ENCODE measurements at regions of chr20 and their contacts with region 1.

Region 1: DNA sequence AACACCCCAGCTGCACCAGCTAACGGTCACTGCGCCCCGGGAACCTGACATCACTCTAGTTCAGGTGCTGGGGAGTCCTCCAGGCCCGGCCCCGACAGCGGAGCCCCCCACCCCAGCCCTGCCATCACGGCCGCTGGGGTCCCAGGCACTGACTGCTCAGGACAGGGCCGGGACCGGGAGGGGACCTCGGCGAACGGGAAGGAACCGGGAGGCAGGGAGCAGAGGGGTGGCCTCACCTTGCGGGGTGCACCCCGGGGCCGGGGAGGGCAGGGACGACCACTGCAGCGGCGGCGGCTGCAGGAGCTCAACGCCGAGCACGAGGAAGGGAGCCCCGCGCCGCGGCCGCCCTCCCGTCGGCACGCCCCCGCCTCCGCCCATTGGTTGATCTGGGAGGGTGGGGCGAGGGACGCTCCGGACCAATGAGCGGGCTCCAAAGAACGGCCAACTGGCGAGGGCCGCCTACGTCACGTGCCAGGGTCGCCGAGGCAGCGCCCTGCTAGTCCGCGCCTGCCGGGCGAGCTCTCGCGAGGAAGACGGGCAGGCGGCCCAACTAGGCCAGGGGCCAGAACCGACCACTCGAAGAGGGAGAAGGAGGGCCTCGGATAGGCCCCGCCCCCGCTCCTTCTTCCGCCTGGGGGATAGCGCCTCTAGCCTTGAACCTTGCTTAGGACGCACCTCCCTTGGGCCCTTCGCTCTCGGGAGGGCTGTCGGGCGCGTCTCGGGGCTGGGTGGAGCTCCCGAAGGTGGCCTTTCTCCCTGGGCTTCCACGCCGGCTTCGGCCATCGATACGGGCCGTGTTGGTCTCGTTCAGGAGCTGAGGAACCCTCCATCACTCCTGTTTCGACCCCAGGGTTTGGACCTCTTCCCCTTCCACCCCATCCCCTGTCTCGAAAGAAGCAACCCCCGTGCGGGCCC is at the start of gene ADISSP:
- DNase-seq: peak; percentile 99
- H3K4me3 ChIP-seq: peak within 1 kb of the TSS; percentile 84
- H3K27ac ChIP-seq: peak within 1 kb of the TSS; percentile 66
- H3K4me1 ChIP-seq: peaks cover 25% of the 10 kb centered on the region
- CTCF ChIP-seq: no peak
- total RNA-seq, gene ADISSP: 62.1 and 66.7 TPM in 2 replicates

Region 2: GRCh38 chr20:3563548-3564177 is 204.0 kb before region 1 on chr20:
- CTCF ChIA-PET with region 1: no interaction called
- POLR2A ChIA-PET with region 1: no interaction called
- intact Hi-C with region 1: loop called (anchors 5 kb)
- DNase-seq: peak; percentile 65
- H3K4me3 ChIP-seq: no peak overlapping the region
- H3K27ac ChIP-seq: no peak overlapping the region
- H3K4me1 ChIP-seq: peaks cover 11% of the 10 kb centered on the region
- CTCF ChIP-seq: peak; percentile 95

Region 3: DNA sequence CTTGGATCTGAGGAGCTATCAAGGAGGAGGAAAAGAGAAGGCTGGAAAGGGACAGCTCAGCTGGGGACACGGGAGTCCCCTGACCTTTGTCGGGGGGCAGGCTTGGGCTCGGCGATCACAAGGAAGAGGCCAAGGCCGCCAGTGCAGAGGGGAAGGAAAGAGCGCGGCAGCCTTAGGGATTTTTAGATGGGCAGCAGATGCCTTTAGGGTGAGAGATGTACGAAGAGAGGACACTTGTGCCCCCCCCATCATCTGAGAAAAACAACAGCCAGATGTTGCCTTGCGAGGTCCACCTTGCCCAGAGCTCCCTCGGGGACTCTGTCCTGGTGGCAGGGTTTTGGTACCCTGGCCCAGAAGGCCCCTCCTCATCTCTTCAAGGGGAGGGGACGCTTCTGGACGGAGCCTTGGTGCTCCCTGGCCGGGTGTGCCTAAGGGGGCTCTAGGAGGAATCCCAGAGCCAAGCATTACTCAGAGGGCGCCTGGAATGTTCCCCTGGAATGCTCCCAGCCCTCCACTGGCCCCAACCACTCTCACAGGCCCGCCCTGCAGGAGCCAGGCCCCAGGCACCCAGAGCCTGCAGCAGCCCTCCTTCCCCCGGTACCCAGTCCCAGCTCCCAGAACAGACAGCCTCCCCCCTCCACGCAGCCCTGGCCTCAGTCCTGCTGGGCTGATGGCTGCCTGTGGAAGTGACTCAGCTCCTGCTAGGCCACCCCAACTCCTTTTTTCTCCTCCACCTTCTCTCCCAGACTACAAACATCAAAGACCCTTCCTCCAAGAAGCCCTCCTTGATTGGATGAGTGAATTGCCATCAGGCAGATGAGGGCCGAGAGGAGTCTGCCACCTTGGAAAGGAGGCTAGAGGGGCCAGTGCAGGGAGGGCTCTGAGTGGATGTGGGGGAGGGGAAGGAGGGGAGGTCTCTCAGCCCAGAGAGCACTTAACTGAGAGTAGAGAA is 87.7 kb before region 1 on chr20:
- CTCF ChIA-PET with region 1: interaction called, 4 read pairs
- POLR2A ChIA-PET with region 1: interaction called, 7 read pairs
- intact Hi-C with region 1: loop called (anchors 1 kb)
- DNase-seq: no peak
- H3K4me3 ChIP-seq: no peak overlapping the region
- H3K27ac ChIP-seq: no peak overlapping the region
- H3K4me1 ChIP-seq: no peaks in the 10 kb centered on the region
- CTCF ChIP-seq: no peak

Region 4: DNA sequence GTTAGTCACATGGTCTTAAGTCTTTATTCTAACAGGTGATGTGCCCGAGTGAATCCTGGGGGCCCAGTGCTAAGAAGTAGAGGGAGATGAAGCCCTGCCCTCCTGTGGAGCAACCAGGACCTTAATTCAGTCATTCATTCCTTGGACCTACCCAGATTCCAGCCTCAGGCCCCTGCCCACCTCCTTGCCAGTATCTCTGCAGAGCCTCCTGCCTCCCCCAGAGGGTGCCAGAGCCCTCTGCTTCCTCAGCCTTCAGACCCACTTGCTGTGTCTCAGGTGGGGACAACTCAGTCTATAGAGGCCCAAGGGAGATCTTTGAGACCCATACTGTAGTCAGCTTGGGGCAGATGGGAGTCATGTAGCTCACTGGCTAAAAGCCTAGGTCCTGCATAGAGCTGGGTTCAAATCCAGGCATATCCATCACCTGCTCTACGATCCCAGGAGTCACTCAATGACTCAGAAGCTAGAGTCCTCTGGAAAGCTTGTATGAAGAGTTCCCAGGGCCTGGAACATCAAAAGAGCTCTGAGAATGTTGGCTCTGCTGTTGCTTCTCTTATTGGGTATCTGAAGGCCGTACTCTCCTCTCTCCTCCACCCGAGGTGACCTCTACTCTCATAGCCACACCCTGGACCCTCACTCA is 51.4 kb before region 1 on chr20:
- CTCF ChIA-PET with region 1: interaction called, 16 read pairs
- POLR2A ChIA-PET with region 1: interaction called, 5 read pairs
- intact Hi-C with region 1: loop called (anchors 1 kb)
- DNase-seq: peak; percentile 74
- H3K4me3 ChIP-seq: no peak overlapping the region
- H3K27ac ChIP-seq: no peak overlapping the region
- H3K4me1 ChIP-seq: peaks cover 13% of the 10 kb centered on the region
- CTCF ChIP-seq: peak; percentile 87

Region 5: GRCh38 chr20:3753098-3753980 is 14.3 kb before region 1 on chr20:
- CTCF ChIA-PET with region 1: interaction called, 6 read pairs
- POLR2A ChIA-PET with region 1: interaction called, 11 read pairs
- intact Hi-C with region 1: loop called (anchors 1 kb)
- DNase-seq: peak; percentile 71
- H3K4me3 ChIP-seq: no peak overlapping the region
- H3K27ac ChIP-seq: no peak overlapping the region
- H3K4me1 ChIP-seq: no peaks in the 10 kb centered on the region
- CTCF ChIP-seq: peak; percentile 86